Thyroid gland (tissue), 4 donors: ENCODE measurements at regions of chr1 and their contacts with region 1.

Region 1: DNA sequence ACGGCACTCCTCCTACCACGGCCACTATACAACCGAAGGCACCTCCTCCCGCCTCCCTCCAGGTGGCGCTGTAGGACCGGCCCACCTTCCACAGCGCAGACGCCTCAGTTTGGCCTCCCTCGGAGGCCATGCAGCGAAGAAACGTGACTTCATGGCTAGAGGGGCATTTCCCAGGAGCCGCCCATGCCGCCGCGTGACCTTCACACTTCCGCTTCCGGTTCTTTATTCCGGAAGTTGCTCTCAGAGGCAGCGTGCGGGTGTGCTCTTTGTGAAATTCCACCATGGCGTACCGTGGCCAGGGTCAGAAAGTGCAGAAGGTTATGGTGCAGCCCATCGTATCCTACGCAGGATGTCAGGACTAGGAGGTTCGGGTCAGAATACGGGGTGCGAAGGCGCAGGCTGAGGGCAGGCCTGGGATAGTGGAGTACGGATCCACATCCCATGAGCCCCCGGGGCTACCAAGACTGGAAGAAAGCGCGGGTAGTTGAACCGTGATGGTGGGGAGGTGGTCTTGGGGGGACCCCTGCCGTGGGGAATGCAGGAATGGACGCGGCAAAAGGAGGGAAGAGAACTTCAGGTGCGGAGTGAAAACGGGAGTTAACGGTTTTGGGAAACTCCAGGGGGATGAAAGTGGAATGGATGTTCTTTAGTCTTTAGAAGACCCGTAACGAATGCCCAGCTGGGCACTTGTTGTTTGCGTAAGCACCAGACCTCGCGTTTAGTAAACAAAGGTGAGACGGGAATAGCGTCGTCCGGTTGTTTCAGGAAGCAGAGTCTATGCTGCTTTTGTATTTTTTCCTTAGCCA is at the start of gene SNRPE:
- DNase-seq: peak; percentile 94 to 97
- H3K4me3 ChIP-seq: peak within 1 kb of the TSS; percentile 68 to 84 (median 78)
- H3K27ac ChIP-seq: peak within 1 kb of the TSS in 1 of 3 donors; percentile 56
- H3K4me1 ChIP-seq: peaks cover 8 to 14% of the 10 kb centered on the region in 2 donors
- H3K27me3 ChIP-seq: no peaks in the 10 kb centered on the region
- CTCF ChIP-seq: peak; percentile 73 to 100 (median 94)
- POLR2A ChIP-seq: peak in 1 of 2 donors; percentile 64
- total RNA-seq, gene SNRPE: 21.9 to 54.7 (median 38.5) TPM

Region 2: DNA sequence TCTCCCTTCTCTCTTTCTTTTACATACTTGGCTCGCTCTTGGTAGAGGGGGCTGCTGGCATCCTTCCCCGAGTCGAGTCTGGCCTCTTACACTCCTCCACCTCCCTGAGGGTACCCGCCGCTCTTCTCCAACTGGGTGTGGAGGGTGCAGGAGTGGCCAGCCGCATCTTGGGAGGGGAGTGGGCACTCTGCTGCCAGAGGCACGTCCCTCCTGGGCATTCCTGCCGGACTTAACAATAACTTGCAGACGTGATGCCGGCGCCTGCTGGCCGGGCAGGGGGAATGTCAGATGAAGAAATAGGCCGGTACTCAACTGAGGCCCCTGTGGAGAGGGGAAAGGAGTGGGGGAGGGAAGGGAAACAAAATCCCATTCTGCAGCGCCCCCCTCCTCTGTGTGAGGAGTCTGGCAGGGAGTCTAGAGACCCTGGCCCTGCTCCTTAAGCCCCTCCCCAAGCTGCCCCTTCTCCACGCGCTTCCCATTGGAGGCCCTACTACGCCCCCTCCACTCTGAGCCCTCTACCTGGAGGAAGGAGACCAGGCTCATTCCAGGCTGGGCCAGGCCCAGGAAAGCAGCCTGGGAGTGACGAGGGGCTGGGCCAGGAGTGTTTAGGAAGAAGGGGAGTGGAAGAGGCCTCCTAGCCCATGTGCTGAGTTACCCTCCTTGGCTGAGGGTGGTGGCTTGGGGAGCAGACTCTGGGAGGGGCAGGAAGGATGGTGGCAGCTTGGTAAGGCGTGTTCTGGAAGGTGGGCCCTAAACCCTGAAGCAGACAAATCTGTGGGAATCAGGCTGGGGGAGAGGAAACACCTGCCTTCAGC is 233.2 kb before region 1 on chr1:
- intact Hi-C with region 1: no loop called
- DNase-seq: peak; percentile 67 to 73
- H3K4me3 ChIP-seq: peak overlapping the region; percentile 32 to 65 (median 54)
- H3K27ac ChIP-seq: peak overlapping the region; percentile 63 to 87 (median 82)
- H3K4me1 ChIP-seq: peaks cover 30 to 39% of the 10 kb centered on the region in 2 donors
- H3K27me3 ChIP-seq: no peaks in the 10 kb centered on the region
- CTCF ChIP-seq: peak in 3 of 6 experiments; percentile 14 to 35 (median 24)
- POLR2A ChIP-seq: no peak

Region 3: GRCh38 chr1:204074274-204075138 is 212.9 kb after region 1 on chr1:
- intact Hi-C with region 1: loop called (anchors 5 kb)
- DNase-seq: peak; percentile 82 to 85
- H3K4me3 ChIP-seq: peak overlapping the region; percentile 78 to 85 (median 85)
- H3K27ac ChIP-seq: peak overlapping the region; percentile 28 to 89 (median 78)
- H3K4me1 ChIP-seq: peaks cover 34 to 39% of the 10 kb centered on the region in 2 donors
- H3K27me3 ChIP-seq: no peaks in the 10 kb centered on the region
- CTCF ChIP-seq: peak in 1 of 6 experiments; percentile 8
- POLR2A ChIP-seq: peak in 1 of 2 donors; percentile 35

Region 4: GRCh38 chr1:204089044-204089751 is 227.6 kb after region 1 on chr1:
- intact Hi-C with region 1: no loop called
- DNase-seq: no peak
- H3K4me3 ChIP-seq: no peak overlapping the region
- H3K27ac ChIP-seq: peak overlapping the region; percentile 9 to 92 (median 59)
- H3K4me1 ChIP-seq: peaks cover 42 to 92% of the 10 kb centered on the region in 2 donors
- H3K27me3 ChIP-seq: no peaks in the 10 kb centered on the region
- CTCF ChIP-seq: peak in 1 of 6 experiments; percentile 11
- POLR2A ChIP-seq: no peak

Region 5: DNA sequence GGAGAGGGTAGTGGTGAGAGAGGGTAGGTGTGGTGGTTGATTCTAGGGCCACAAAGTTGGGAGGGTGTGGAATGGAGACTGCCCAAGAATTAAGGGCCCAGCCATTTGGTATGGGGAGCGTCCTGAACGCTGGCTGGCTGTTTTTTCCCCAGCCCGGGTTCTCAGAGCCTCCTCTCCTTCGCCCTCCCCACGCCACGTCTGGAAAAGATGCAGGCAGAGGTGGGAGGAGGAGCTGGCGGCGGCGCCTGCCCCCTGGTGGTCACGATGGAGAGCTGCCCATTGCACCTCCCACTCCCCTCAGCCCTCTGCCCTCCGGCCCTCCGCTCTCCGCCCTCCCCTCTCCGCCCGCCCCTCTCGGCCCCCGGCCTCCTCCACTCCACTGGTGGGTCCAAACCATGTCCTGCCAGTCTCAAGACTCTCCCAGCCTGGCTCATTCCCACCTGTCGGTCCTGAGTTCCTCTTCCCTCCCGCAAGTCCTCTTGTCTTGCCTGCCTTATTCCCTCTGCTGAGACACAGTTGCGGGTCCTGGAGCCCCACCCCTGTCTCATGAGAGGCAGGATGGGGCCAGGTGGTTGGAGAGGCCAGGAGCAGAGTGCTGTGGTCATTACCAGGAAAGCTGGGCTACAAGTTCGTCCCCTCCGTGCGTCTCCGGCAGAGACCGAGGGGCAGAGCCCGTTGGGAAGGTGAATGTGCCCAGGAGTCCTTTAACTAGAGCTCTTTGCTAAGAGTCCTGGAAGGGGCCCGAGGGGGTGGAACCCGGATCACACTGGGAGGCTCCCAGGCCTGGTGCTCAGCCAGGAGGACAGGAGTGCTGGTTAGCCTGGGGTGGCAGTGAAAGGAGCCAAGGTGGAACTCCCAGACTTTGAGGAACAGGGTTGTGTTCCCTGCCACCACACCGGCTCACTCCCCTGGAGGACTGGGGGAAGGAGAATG is 267.6 kb after region 1 on chr1:
- intact Hi-C with region 1: loop called (anchors 5 kb)
- DNase-seq: peak; percentile 86 to 87
- H3K4me3 ChIP-seq: peak overlapping the region in 1 of 3 donors; percentile 21
- H3K27ac ChIP-seq: peak overlapping the region; percentile 68 to 95 (median 87)
- H3K4me1 ChIP-seq: peaks cover 38 to 40% of the 10 kb centered on the region in 2 donors
- H3K27me3 ChIP-seq: no peaks in the 10 kb centered on the region
- CTCF ChIP-seq: peak; percentile 74 to 93 (median 82)
- POLR2A ChIP-seq: peak in 1 of 2 donors; percentile 48

Region 6: DNA sequence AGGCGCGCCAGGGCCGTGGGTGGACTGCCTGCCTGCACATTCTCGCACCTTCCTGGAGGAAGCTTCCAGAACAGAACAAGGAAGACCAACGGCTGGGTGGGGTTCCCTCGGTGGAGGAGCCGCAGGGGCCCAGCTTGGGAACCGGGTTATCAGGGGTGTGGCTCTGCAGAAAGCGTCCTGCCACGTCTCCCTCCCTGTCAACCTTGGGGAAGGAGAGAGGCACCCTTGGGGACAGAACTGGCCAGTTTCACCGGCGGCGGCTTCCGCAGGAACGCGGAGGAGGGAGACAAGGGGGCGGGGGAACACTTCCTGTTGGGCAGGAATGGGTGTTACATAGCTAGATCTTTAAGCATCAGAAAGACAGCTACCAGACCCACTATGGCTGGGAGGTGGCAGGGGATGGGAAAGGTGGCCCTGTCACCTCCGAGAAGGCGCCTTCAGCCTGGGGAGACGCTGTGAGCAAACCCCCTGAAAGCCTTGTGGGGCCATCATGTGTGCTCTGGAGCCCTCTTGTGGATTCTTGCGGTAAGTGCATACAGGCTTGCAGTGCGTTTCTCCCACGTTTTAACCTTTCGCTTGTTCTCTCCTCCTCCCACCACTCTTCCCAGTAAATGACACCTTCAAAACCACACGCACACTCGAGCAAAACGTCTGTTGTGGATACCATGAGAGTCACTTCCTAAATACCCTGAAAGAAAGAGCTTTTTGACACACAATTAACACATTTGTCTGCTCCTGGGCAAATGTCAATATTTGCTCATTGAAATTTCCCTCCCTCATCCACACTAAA is 501.9 kb after region 1 on chr1:
- intact Hi-C with region 1: loop called (anchors 10 kb)
- DNase-seq: peak; percentile 66 to 68
- H3K4me3 ChIP-seq: peak overlapping the region in 2 of 3 donors; percentile 21 to 37
- H3K27ac ChIP-seq: peak overlapping the region in 2 of 3 donors; percentile 10 to 74
- H3K4me1 ChIP-seq: peaks cover 6% of the 10 kb centered on the region in 2 donors
- H3K27me3 ChIP-seq: no peaks in the 10 kb centered on the region
- CTCF ChIP-seq: peak; percentile 92 to 99 (median 97)
- POLR2A ChIP-seq: no peak